Transverse colon (tissue), 4 donors: ENCODE measurements at regions of chr11 and their contacts with region 1.

Region 1: DNA sequence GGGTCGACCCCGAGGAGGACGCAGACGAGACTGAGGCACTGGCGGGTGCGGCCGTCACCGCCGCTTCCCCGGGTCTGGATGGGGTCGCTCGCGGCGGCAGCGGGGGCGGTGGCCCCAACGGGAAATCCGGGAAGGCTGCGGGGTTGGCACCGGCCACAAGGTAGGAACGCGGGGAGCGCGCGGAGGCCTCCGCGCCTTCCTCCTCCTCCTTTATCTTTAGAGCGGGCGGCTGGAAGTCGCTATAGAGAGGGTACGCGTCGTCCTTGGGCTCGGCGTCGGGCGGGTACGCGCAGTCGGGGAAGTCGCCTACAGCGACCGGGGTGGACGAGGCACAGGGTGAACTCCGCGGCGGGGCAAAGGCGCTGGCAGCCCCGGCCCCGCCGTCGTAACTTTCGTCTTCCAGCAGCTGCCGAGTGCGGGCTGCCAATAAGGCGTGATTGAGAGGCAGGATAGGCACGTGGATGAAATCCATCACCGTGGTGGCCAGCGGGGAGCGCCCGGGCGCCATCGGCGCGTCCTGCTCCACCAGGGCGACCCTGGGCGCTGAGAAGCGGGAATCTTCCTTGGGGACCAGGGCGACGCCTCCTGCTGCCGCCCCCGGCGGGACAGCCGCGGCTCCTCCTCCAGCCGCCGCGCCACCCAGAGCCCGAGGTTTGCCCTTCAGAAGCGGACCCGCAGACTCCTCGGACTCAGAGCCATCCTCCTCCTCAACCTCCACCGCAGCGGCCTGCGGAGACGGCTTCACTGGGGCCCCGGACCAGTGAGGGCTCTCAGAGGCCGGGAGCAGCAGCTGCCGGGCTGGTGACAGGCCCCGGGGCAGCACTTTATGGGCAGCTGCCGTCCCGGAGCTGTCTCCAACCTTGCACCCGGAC is 1.7 kb downstream of the PGR start:
- DNase-seq: peak; percentile 28
- H3K4me3 ChIP-seq: peak overlapping the region; percentile 16 to 65 (median 54)
- H3K27ac ChIP-seq: peak overlapping the region; percentile 70 to 82 (median 76)
- H3K4me1 ChIP-seq: peaks cover 0 to 34% (median 22%) of the 10 kb centered on the region in 4 donors
- H3K27me3 ChIP-seq: peaks cover 68% of the 10 kb centered on the region
- CTCF ChIP-seq: no peak
- EP300 ChIP-seq: no peak
- POLR2A ChIP-seq: no peak

Region 2: GRCh38 chr11:101187748-101188147 is 59.8 kb after region 1 on chr11:
- in situ Hi-C with region 1: no loop called
- intact Hi-C with region 1: loop called (anchors 5 kb)
- DNase-seq: no peak
- H3K4me3 ChIP-seq: no peak overlapping the region
- H3K27ac ChIP-seq: peak overlapping the region in 2 of 4 donors; percentile 22 to 34
- H3K4me1 ChIP-seq: peaks cover 0 to 4% (median 0%) of the 10 kb centered on the region in 4 donors
- H3K27me3 ChIP-seq: no peaks in the 10 kb centered on the region
- CTCF ChIP-seq: no peak
- EP300 ChIP-seq: no peak
- POLR2A ChIP-seq: no peak